ENCODE measurements at regions of chr18 and their contacts with region 1.

Region 1: DNA sequence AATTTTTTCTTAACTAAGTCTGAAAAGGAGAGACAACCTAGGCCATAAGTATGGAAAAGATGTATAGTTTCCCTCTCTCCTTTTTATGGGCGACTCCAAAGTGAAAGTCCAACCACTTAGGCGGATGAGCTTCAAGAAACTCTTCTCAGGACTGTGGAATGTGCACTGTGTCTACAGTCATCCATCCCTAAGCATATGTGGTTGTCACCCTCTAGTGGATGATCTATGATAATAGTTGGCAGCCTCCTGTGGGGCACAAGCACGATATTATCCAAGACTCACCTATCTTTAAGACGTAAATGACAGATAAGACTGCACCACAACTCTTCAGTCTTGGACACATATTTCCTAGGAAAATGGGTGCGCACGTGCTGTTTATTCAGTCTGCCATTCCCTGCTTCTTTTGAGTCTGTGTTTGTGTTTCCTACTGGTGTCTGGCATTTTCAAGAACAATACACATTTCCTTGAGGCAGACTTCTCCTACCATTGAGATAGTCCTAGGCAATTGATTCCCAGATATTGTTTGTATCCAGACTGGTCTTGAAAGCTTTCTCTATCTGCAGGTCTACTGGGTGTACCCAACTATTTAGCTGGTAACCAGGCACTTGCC is 145.5 kb upstream of the CTAGE1 start:
- DNase-seq: peak; percentile 95
- H3K4me3 ChIP-seq: peak overlapping the region in 2 of 3 experiments; percentile 3 to 47
- H3K27ac ChIP-seq: peak overlapping the region; percentile 59
- H3K4me1 ChIP-seq: peaks cover 41% of the 10 kb centered on the region
- H3K27me3 ChIP-seq: no peaks in the 10 kb centered on the region
- CTCF ChIP-seq: peak; percentile 60 to 68
- POLR2A ChIP-seq: no peak

Region 2: GRCh38 chr18:21897811-21898210 is 665.4 kb before region 1 on chr18:
- CTCF ChIA-PET with region 1: interaction called, 4 read pairs
- POLR2A ChIA-PET with region 1: no interaction called
- dilution Hi-C with region 1: no loop called
- intact Hi-C with region 1: loop called (anchors 1 kb)
- DNase-seq: peak; percentile 57
- H3K4me3 ChIP-seq: no peak overlapping the region
- H3K27ac ChIP-seq: no peak overlapping the region
- H3K4me1 ChIP-seq: peaks cover 9% of the 10 kb centered on the region
- H3K27me3 ChIP-seq: no peaks in the 10 kb centered on the region
- CTCF ChIP-seq: peak; percentile 71 to 74
- POLR2A ChIP-seq: no peak

Region 3: DNA sequence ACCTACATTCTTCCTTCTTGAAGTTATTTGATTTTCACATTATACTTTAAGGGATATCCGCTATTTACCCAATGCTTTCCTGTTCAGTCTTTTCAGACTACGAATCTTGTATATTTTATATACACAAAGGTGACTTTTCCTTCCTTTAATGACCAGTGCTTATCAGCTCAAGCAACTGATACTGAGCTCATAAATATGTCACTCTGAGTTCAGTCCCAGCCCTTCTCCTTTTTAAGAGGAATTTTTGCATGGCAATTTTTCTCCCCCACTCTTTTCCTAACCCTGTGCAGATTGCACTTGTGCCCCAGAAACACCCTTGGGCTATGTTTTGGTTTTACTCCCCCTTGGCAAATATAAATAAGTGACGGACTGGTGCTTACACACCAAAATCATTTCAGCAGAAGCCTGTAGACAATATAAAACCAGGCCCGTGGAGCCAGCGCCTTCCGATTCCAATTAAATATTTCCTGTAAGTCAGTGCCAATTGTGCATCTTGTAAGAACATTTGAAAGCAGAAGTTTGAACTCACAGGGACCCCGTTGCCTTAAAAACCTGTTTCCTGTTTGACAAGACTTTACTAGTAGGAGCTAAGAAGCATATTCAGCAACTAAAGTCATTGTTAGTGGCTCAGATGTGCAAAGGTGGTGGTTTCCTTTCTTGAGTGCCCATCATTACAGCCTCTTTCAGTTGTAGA is 460.1 kb before region 1 on chr18:
- CTCF ChIA-PET with region 1: interaction called, 8 read pairs
- POLR2A ChIA-PET with region 1: no interaction called
- dilution Hi-C with region 1: no loop called
- intact Hi-C with region 1: loop called (anchors 2 kb)
- DNase-seq: peak; percentile 94
- H3K4me3 ChIP-seq: no peak overlapping the region
- H3K27ac ChIP-seq: peak overlapping the region; percentile 53
- H3K4me1 ChIP-seq: peaks cover 22% of the 10 kb centered on the region
- H3K27me3 ChIP-seq: peaks cover 18 to 20% of the 10 kb centered on the region in 2 experiments
- CTCF ChIP-seq: no peak
- POLR2A ChIP-seq: no peak

Region 4: DNA sequence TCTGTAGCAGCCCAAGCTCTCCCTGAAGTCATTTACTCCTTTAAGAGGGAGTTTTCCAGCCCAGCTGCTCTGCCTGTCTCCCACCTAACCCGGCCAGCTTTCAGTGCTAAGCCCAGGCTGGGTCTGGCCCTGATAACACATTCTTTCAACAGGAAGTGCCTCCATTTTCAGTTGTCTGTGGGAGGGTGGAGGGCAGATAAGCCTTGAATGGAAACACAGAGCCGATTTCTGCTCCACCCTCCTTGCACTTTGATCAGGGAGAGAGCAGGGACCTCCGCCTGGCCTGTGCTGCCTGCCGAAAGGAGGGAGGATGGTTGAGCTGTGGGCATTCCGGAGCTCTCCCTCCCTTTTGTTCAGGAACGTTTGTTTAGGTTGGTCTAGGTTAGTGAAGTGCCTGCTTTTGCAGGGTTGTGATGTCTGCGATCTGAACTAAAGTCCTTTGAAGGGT is 369.0 kb before region 1 on chr18:
- CTCF ChIA-PET with region 1: interaction called, 8 read pairs
- POLR2A ChIA-PET with region 1: no interaction called
- dilution Hi-C with region 1: no loop called
- intact Hi-C with region 1: loop called (anchors 5 kb)
- DNase-seq: peak; percentile 79
- H3K4me3 ChIP-seq: no peak overlapping the region
- H3K27ac ChIP-seq: peak overlapping the region; percentile 83
- H3K4me1 ChIP-seq: peaks cover 62% of the 10 kb centered on the region
- H3K27me3 ChIP-seq: no peaks in the 10 kb centered on the region
- CTCF ChIP-seq: no peak
- POLR2A ChIP-seq: no peak

Region 5: DNA sequence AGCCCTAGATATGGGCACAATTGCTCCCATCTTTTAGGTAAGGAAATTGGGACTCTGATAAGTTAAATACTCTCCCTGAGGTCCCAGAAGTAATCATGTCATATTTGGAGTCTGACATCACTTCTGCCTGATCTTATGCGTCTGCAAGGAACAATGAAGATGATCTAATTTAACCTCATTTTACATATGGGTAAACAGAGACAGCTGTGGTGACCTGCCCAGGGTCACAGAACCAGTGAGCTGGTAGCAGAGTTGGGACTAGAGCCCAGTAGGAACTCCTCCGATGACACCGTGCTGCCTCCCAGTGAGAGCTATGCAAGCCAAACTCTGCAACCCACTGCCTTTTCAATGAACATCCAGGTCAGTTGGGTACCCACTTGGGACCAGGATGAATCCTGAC is 163.3 kb before region 1 on chr18:
- CTCF ChIA-PET with region 1: interaction called, 13 read pairs
- POLR2A ChIA-PET with region 1: no interaction called
- dilution Hi-C with region 1: no loop called
- intact Hi-C with region 1: loop called (anchors 1 kb)
- DNase-seq: peak; percentile 69
- H3K4me3 ChIP-seq: no peak overlapping the region
- H3K27ac ChIP-seq: peak overlapping the region; percentile 84
- H3K4me1 ChIP-seq: peaks cover 24% of the 10 kb centered on the region
- H3K27me3 ChIP-seq: no peaks in the 10 kb centered on the region
- CTCF ChIP-seq: no peak
- POLR2A ChIP-seq: no peak

Region 6: GRCh38 chr18:22494771-22495170 is 68.4 kb before region 1 on chr18:
- CTCF ChIA-PET with region 1: interaction called, 6 read pairs
- POLR2A ChIA-PET with region 1: no interaction called
- dilution Hi-C with region 1: no loop called
- intact Hi-C with region 1: loop called (anchors 5 kb)
- DNase-seq: peak; percentile 70
- H3K4me3 ChIP-seq: no peak overlapping the region
- H3K27ac ChIP-seq: peak overlapping the region; percentile 23
- H3K4me1 ChIP-seq: peaks cover 9% of the 10 kb centered on the region
- H3K27me3 ChIP-seq: no peaks in the 10 kb centered on the region
- CTCF ChIP-seq: no peak
- POLR2A ChIP-seq: no peak

Region 7: GRCh38 chr18:22585821-22586220 is 22.6 kb after region 1 on chr18:
- CTCF ChIA-PET with region 1: no interaction called
- POLR2A ChIA-PET with region 1: no interaction called
- dilution Hi-C with region 1: no loop called
- intact Hi-C with region 1: no loop called
- DNase-seq: no peak
- H3K4me3 ChIP-seq: no peak overlapping the region
- H3K27ac ChIP-seq: no peak overlapping the region
- H3K4me1 ChIP-seq: no peaks in the 10 kb centered on the region
- H3K27me3 ChIP-seq: peaks cover 0 to 2% of the 10 kb centered on the region in 2 experiments
- CTCF ChIP-seq: no peak
- POLR2A ChIP-seq: no peak

Region 8: DNA sequence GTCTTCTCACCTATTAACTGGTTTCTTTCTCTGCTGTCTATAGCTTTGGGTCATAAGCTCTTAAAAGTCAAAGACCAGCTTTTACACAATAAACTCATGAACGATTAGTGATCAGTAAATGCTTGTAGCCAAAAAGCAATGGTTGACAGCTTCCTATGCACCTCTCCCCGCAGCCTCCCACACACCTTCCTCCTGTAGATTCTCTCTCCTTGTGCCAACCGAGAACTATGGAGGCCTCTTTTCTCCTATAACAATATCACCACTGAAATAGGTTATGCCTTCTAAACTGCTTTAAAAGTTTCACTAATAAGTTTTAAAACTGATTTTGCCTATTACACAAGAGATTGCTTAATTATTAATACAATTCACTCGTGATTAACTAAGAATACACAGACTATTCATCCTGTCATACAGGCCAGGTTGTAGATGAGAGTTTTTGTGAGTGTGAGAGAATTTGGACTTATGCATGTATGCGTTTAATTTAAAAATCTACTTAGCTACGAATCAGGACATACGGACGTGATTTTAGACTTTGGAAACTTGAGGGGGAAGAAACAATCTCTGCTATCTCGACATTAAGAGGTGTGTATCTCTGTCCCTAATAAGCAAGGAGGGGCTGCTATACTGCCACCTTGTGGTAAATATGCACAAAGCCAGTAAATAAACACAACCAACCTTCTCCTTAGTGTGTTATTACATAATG is 140.8 kb after region 1 on chr18:
- CTCF ChIA-PET with region 1: interaction called, 12 read pairs
- POLR2A ChIA-PET with region 1: no interaction called
- dilution Hi-C with region 1: no loop called
- intact Hi-C with region 1: loop called (anchors 1 kb)
- DNase-seq: peak; percentile 71
- H3K4me3 ChIP-seq: no peak overlapping the region
- H3K27ac ChIP-seq: no peak overlapping the region
- H3K4me1 ChIP-seq: peaks cover 4% of the 10 kb centered on the region
- H3K27me3 ChIP-seq: no peaks in the 10 kb centered on the region
- CTCF ChIP-seq: peak; percentile 66 to 69
- POLR2A ChIP-seq: no peak

Measured in endothelial cell of umbilical vein (primary cell).